IMR-90 (cell line): ENCODE measurements at regions of chr4 and their contacts with region 1.

Region 1: GRCh38 chr4:142975618-142976017 is 129.5 kb upstream of the INPP4B start:
- DNase-seq: no peak
- ATAC-seq: no peak
- H3K4me3 ChIP-seq: no peak overlapping the region
- H3K27ac ChIP-seq: no peak overlapping the region
- H3K4me1 ChIP-seq: no peaks in the 10 kb centered on the region
- H3K27me3 ChIP-seq: no peaks in the 10 kb centered on the region
- CTCF ChIP-seq: no peak
- POLR2A ChIP-seq: no peak
- RAD21 ChIP-seq: no peak

Region 2: DNA sequence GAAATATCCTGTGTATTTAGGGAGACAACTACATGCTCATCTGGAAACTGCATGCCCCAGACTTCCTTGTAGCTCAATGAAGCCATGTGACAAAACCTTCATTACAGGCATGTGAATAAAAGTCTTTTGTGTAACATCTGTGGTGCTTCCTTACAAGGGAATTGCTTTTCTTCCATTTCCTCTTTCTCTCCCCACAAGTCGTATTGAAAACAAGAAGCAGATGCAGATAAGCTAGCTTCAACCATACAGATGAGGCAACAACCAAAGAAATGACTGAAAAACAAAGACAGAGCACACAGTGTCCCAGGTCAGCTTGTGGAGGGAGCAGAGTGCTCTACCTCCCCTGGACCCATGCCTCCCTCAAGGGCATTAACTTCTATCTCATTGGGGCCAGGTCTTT is 13.8 kb before region 1 on chr4:
- CTCF ChIA-PET with region 1: interaction called, 5 read pairs
- POLR2A ChIA-PET with region 1: no interaction called
- dilution Hi-C with region 1: no loop called
- in situ Hi-C with region 1: no loop called
- intact Hi-C with region 1: loop called (anchors 1 kb)
- DNase-seq: no peak
- ATAC-seq: no peak
- H3K4me3 ChIP-seq: no peak overlapping the region
- H3K27ac ChIP-seq: no peak overlapping the region
- H3K4me1 ChIP-seq: no peaks in the 10 kb centered on the region
- H3K27me3 ChIP-seq: no peaks in the 10 kb centered on the region
- CTCF ChIP-seq: no peak
- POLR2A ChIP-seq: no peak
- RAD21 ChIP-seq: no peak